CD4-positive, alpha-beta memory T cell (primary cell): ENCODE measurements at regions of chr1 and their contacts with region 1.

Region 1: DNA sequence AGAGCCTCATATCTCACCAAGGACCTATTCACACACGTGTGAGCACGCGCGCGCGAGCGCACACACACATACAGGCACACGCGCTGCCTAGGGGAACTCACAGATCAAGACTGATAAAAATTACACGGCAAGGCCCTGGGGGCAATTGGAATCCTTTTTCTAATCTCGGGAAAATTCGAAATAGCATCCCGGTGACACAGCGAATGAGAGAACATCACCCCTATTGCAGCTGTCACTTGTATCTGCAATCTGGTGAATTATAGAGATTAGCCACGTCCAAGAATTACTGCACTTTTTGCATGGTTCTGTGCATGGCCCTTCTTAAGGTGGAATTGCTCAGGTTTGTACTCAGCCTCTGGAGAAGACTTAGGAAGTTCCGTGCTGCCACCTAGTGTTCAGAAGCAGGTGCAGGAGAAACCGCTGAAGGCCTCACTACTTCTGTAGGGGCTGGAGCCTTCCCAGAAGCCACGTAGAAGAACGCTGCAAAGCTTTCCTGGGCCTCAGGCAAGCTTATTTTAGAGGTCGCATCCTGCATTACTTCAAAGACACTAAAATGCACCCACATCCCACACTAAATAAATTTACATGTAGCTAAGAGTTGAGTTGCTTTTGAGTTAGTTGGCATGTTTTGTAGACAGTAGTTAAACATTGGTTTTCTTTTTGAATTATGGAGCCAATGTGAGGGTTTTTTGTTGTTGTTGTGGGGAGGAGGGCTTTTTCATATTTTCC is 229.2 kb upstream of the CAMK1G start:
- DNase-seq: peak in 4 of 5 donors; percentile 11 to 28 (median 20)
- H3K4me3 ChIP-seq: no peak overlapping the region
- H3K4me3 Mint-ChIP-seq: no peak overlapping the region
- H3K27ac ChIP-seq: no peak overlapping the region
- H3K27ac Mint-ChIP-seq: no peak overlapping the region
- H3K4me1 ChIP-seq: no peaks in the 10 kb centered on the region
- H3K4me1 Mint-ChIP-seq: no peaks in the 10 kb centered on the region
- H3K27me3 ChIP-seq: no peaks in the 10 kb centered on the region
- H3K27me3 Mint-ChIP-seq: peaks cover 2 to 7% of the 10 kb centered on the region in 2 donors

Region 2: DNA sequence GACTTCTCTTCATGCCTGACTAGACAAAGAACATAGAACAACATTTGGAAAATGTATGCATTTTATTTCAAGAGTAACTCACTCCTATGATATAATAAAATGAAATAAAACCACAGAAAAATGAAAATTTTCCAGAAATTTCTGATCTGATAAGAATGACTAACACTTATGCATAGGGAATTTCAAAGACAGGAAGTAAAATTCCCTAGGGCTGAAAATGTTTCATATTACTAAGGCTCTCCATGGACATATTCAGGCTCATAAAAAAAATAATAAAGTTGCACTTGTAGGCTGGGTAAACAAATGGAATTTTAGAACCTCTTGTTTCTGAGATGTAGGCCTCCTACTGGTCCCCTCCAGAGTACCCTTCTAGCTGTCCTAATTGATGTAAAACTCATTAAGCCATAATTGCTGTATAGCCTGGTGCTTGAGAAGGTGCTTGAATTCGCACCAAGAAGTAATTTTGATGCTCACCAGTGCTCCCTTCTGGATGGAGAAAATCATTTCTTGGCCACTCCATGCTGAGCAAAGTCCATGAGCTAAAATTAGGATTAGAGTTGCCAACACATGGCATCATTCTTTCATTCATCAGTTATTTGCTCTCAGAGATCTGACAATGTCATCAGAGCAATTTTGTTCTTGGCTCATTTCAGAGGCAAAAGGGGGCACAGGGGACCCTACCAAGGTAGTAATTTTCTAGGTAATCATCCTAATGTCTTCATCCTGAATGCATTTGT is 411.7 kb before region 1 on chr1:
- CTCF ChIA-PET with region 1: no interaction called
- POLR2A ChIA-PET with region 1: no interaction called
- intact Hi-C with region 1: no loop called
- DNase-seq: no peak
- H3K4me3 ChIP-seq: no peak overlapping the region
- H3K4me3 Mint-ChIP-seq: no peak overlapping the region
- H3K27ac ChIP-seq: no peak overlapping the region
- H3K27ac Mint-ChIP-seq: no peak overlapping the region
- H3K4me1 ChIP-seq: no peaks in the 10 kb centered on the region
- H3K4me1 Mint-ChIP-seq: no peaks in the 10 kb centered on the region
- H3K27me3 ChIP-seq: no peaks in the 10 kb centered on the region
- H3K27me3 Mint-ChIP-seq: peaks cover 0 to 6% of the 10 kb centered on the region in 2 donors

Region 3: GRCh38 chr1:209342441-209343175 is 11.7 kb before region 1 on chr1:
- CTCF ChIA-PET with region 1: interaction called, 11 read pairs
- POLR2A ChIA-PET with region 1: no interaction called
- intact Hi-C with region 1: no loop called
- DNase-seq: no peak
- H3K4me3 ChIP-seq: no peak overlapping the region
- H3K4me3 Mint-ChIP-seq: no peak overlapping the region
- H3K27ac ChIP-seq: no peak overlapping the region
- H3K27ac Mint-ChIP-seq: no peak overlapping the region
- H3K4me1 ChIP-seq: no peaks in the 10 kb centered on the region
- H3K4me1 Mint-ChIP-seq: no peaks in the 10 kb centered on the region
- H3K27me3 ChIP-seq: no peaks in the 10 kb centered on the region
- H3K27me3 Mint-ChIP-seq: peaks cover 0 to 13% of the 10 kb centered on the region in 2 donors

Region 4: DNA sequence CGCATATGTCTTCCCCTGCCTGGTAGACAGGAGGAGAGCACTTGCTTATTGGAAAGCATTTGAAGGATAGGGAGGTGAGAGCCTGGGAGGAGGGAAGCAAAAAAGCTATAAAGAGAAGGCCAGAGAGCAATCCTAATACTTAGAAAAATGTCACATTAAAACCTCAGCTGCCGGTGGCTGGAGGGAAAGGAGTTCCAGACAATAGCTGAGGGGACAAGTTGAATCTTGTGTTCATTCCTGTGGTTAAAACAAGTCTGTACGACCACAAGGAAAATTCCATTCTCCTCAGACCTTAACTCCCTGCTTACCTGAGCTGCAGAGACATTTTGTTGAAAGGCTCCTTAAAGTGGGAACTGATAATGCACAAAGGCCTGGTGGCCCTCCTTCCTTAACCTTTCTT is 10.4 kb after region 1 on chr1:
- CTCF ChIA-PET with region 1: interaction called, 18 read pairs
- POLR2A ChIA-PET with region 1: no interaction called
- intact Hi-C with region 1: no loop called
- DNase-seq: no peak
- H3K4me3 ChIP-seq: no peak overlapping the region
- H3K4me3 Mint-ChIP-seq: no peak overlapping the region
- H3K27ac ChIP-seq: no peak overlapping the region
- H3K27ac Mint-ChIP-seq: no peak overlapping the region
- H3K4me1 ChIP-seq: no peaks in the 10 kb centered on the region
- H3K4me1 Mint-ChIP-seq: no peaks in the 10 kb centered on the region
- H3K27me3 ChIP-seq: no peaks in the 10 kb centered on the region
- H3K27me3 Mint-ChIP-seq: peaks cover 15 to 26% of the 10 kb centered on the region in 2 donors

Region 5: DNA sequence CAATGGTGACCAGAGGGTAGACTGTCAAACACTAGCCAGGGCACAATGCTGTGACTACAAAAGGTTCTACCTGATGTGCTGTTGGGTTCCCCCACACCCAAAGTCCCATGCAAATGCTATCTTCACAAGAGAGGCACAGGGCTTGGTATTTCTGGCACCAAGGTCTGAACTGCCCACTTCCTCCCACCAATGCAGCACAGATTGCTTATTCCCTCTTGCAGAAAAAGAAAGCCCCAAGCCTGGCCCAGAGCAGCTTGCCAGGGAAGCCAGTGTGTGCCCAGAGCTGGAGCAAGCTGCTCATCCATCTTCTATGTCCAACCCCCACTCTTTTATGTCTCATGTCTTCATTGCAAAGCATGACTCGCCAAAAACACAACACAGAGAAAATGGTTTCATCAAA is 79.8 kb after region 1 on chr1:
- CTCF ChIA-PET with region 1: no interaction called
- POLR2A ChIA-PET with region 1: no interaction called
- intact Hi-C with region 1: no loop called
- DNase-seq: no peak
- H3K4me3 ChIP-seq: no peak overlapping the region
- H3K4me3 Mint-ChIP-seq: no peak overlapping the region
- H3K27ac ChIP-seq: no peak overlapping the region
- H3K27ac Mint-ChIP-seq: no peak overlapping the region
- H3K4me1 ChIP-seq: no peaks in the 10 kb centered on the region
- H3K4me1 Mint-ChIP-seq: no peaks in the 10 kb centered on the region
- H3K27me3 ChIP-seq: no peaks in the 10 kb centered on the region
- H3K27me3 Mint-ChIP-seq: peaks cover 6 to 25% of the 10 kb centered on the region in 2 donors

Region 6: DNA sequence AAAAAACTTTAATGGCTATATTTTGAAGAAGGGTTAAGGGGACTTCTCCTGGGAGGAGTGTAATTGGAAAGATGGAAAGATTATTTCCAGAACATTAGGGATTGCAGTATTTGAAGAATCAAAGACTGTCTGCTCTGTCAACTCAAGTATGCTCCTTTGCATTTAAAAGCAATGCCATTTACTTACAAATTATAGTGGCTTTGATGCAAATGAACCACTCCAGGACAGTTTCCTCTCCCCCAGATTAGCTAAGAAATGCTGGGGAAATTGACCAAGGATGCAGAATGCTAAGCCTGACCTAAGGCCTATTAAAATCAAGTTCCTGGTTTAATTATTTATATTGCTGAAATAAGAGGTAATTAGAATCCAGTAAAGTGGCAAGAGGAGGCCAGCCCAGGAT is 118.8 kb after region 1 on chr1:
- CTCF ChIA-PET with region 1: no interaction called
- POLR2A ChIA-PET with region 1: no interaction called
- intact Hi-C with region 1: no loop called
- DNase-seq: no peak
- H3K4me3 ChIP-seq: no peak overlapping the region
- H3K4me3 Mint-ChIP-seq: no peak overlapping the region
- H3K27ac ChIP-seq: no peak overlapping the region
- H3K27ac Mint-ChIP-seq: no peak overlapping the region
- H3K4me1 ChIP-seq: no peaks in the 10 kb centered on the region
- H3K4me1 Mint-ChIP-seq: no peaks in the 10 kb centered on the region
- H3K27me3 ChIP-seq: no peaks in the 10 kb centered on the region
- H3K27me3 Mint-ChIP-seq: peaks cover 3 to 7% of the 10 kb centered on the region in 2 donors